Esophagus muscularis mucosa (tissue), 4 donors: ENCODE measurements at regions of chr10 and their contacts with region 1.

Region 1: GRCh38 chr10:7872041-7872442 is 53.7 kb downstream of the TAF3 start:
- DNase-seq: no peak
- H3K4me3 ChIP-seq: peak overlapping the region; percentile 3 to 28 (median 22)
- H3K27ac ChIP-seq: no peak overlapping the region
- H3K4me1 ChIP-seq: peaks cover 0 to 2% (median 0%) of the 10 kb centered on the region in 4 donors
- H3K27me3 ChIP-seq: no peaks in the 10 kb centered on the region
- CTCF ChIP-seq: peak; percentile 60 to 81 (median 80)
- EP300 ChIP-seq: no peak
- POLR2A ChIP-seq: no peak

Region 2: GRCh38 chr10:9209105-9209798 is 1337.2 kb after region 1 on chr10:
- intact Hi-C with region 1: loop called (anchors 1 kb)
- DNase-seq: no peak
- H3K4me3 ChIP-seq: no peak overlapping the region
- H3K27ac ChIP-seq: no peak overlapping the region
- H3K4me1 ChIP-seq: peaks cover 0 to 6% (median 0%) of the 10 kb centered on the region in 4 donors
- H3K27me3 ChIP-seq: peaks cover 0 to 13% (median 0%) of the 10 kb centered on the region in 4 donors
- CTCF ChIP-seq: peak; percentile 77 to 92 (median 89)
- EP300 ChIP-seq: no peak
- POLR2A ChIP-seq: no peak

Region 3: DNA sequence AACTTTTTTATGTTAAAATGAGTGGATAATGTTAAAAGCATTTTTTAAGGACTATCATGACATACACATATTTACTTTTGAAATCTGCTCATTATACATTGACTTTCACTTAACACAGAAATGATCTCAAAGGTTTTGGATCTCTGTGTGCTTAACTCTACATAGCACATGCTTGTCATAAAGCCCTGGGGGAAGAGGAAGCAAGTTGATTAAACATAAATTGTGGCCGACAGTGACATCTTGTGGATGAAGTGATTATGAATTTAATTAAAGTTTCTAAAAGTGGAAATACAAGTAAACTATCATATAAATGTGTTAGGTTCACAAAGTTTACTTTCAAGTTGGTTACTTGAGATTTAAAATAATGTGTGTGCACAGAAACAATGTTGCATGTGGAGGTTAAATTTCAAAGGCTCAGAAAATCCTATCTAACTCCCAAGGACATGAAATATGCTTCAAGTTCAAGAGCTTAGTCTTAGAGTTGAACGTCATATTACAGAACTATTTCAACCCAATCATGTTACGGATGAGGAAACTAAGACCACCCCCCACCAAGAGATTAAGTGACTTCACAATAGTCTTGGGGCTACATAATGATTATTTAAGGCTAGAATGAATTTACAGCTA is 1430.2 kb after region 1 on chr10:
- intact Hi-C with region 1: loop called (anchors 10 kb)
- DNase-seq: no peak
- H3K4me3 ChIP-seq: no peak overlapping the region
- H3K27ac ChIP-seq: no peak overlapping the region
- H3K4me1 ChIP-seq: no peaks in the 10 kb centered on the region
- H3K27me3 ChIP-seq: peaks cover 0 to 4% (median 0%) of the 10 kb centered on the region in 4 donors
- CTCF ChIP-seq: peak; percentile 30 to 41 (median 38)
- EP300 ChIP-seq: no peak
- POLR2A ChIP-seq: no peak